Pancreas (tissue), 10 donors: ENCODE measurements at regions of chr9 and their contacts with region 1.

Region 1: GRCh38 chr9:70589571-70590314 is 175.3 kb upstream of the KLF9 start:
- DNase-seq: no peak
- ATAC-seq: peak in 3 of 4 donors; percentile 48 to 67 (median 59)
- H3K4me3 ChIP-seq: no peak overlapping the region
- H3K27ac ChIP-seq: no peak overlapping the region
- H3K4me1 ChIP-seq: peaks cover 0 to 4% (median 0%) of the 10 kb centered on the region in 3 donors
- H3K27me3 ChIP-seq: no peaks in the 10 kb centered on the region
- CTCF ChIP-seq: no peak

Region 2: DNA sequence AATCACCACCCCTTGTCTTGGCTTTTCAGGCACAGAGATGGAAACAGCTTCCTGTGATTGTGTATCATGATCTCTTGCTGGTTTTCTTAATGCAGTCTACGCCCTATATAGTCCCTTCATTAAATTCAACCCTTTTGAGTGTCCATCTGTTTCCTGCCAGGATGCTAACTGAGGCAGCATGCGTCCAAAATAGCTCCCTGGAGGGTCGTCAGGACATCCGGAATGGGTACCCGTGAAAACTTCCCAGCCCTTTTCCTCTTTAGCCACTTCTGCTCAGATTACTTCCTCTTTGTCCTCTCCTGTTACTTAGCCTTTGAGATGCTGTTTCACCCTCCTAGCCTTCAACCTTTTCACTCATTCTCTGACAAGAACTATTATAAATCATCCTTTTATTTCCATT is 95.5 kb before region 1 on chr9:
- intact Hi-C with region 1: loop called in 1 of 3 experiments (anchors 10 kb)
- DNase-seq: no peak
- ATAC-seq: peak in 2 of 4 donors; percentile 22 to 52
- H3K4me3 ChIP-seq: no peak overlapping the region
- H3K27ac ChIP-seq: no peak overlapping the region
- H3K4me1 ChIP-seq: no peaks in the 10 kb centered on the region
- H3K27me3 ChIP-seq: no peaks in the 10 kb centered on the region
- CTCF ChIP-seq: no peak